Panc1 (cell line): ENCODE measurements at regions of chrX and their contacts with region 1.

Region 1: GRCh38 chrX:17242470-17242869 is 132.5 kb upstream of the NHS start:
- DNase-seq: peak; percentile 20
- ATAC-seq: 0 out of 2 replicates have a peak, but pooled peaks have one; percentile 66
- H3K4me3 ChIP-seq: no peak overlapping the region
- H3K27ac ChIP-seq: no peak overlapping the region
- H3K4me1 ChIP-seq: no peaks in the 10 kb centered on the region
- H3K27me3 ChIP-seq: no peaks in the 10 kb centered on the region
- CTCF ChIP-seq: peak; percentile 66

Region 2: DNA sequence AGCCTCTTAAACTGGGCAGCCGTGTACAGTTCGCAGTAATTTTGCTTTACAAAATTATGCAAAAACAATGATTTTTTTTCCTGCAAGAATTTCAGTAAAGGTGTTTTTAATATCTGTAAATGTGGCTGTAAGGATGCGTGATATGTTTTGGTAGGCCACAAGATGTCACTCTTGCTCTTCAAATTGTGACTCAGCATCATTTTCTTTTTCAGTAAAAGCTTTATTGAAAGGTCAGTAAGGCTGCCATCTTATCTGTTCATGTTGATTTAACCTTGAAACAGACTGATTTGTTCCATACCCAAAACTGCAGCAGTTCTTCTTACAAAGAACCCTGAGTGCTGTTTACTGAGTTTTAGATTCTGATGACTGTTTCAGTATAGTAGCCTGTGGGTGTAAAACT is 416.3 kb before region 1 on chrX:
- CTCF ChIA-PET with region 1: no interaction called
- POLR2A ChIA-PET with region 1: no interaction called
- in situ Hi-C with region 1: no loop called
- intact Hi-C with region 1: no loop called
- DNase-seq: no peak
- ATAC-seq: no peak
- H3K4me3 ChIP-seq: no peak overlapping the region
- H3K27ac ChIP-seq: no peak overlapping the region
- H3K4me1 ChIP-seq: no peaks in the 10 kb centered on the region
- H3K27me3 ChIP-seq: no peaks in the 10 kb centered on the region
- CTCF ChIP-seq: peak; percentile 52

Region 3: DNA sequence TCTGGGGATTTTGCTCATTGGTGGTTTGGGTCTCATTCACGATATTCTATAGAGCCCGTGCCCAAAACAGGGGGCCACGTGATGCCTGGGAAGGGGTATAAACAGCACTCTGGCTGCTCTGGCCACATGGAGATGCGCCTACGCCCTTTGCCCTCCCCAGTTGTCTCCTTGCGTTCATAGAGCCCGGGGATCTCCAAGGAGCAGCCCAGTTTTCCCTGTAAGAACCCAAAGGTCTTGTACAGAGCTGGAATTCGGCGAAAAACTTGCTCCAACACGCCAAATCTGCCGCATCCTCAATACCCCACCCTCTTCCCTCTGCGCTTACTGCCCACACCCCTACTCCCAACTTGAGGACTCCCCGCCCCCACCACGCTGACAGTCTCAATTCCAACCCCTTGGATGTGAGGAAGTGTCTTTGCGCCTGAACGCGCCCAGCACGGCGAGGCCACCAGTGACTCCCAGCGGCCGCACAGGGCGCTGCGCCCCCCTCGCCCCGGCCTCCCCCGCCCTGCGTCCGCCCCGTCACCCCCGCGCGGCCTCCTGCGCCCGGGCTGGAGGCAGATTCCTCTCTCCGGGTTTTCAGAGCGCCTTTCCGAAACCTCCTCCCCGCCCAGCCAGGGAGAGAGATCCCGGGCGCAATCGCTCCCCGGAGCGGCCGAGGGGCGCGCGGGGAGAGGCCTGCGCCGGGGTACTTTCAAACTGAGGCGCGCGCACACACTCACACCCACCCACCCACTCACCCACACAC is 132.3 kb after region 1 on chrX and contains the start of gene NHS:
- CTCF ChIA-PET with region 1: no interaction called
- POLR2A ChIA-PET with region 1: no interaction called
- in situ Hi-C with region 1: no loop called
- intact Hi-C with region 1: loop called (anchors 10 kb)
- DNase-seq: no peak
- ATAC-seq: peak; percentile 69
- H3K4me3 ChIP-seq: peak within 1 kb of the TSS; percentile 34 to 52
- H3K27ac ChIP-seq: no peak within 1 kb of the TSS
- H3K4me1 ChIP-seq: no peaks in the 10 kb centered on the region
- H3K27me3 ChIP-seq: no peaks in the 10 kb centered on the region
- CTCF ChIP-seq: peak; percentile 69
- total RNA-seq, gene NHS: 0.80 TPM

Region 4: DNA sequence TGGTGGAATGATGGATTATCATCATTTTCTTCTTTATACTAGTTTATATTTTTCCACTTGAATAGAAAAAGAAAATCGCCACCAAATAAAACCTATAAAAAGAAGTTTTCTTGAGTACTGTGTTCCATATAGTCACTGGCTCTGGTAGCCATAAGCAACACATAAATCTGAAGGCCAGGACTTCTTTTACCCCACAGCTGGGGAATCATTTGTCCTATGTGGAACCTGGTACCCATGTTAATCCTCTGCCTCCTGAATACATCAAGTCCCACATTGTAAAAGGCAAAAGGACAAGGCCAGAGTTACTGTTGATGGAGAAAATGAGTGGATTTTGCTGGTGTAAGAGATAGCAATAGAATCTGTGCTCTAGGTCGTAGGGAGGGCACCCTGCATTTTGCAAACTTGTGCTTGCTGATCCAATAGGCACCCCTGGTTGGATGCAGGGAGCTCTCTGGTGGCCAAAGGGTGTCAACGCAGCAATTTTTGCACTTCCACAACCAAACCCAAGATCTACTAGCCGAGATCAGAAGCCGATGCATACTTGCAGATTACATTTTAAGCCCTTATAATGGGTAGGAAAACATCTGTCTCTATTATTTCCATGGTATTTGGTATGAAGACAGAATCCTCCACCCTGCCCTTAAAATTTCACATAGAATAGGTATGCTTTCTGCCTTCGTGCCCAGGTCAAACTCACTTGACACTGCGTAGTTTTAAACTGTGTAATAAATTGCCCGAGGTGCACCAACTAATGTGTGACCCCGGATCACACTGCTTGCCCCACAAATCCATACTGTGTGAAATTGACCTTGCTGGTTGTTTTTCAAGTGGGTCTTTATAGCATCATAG is 348.6 kb after region 1 on chrX:
- CTCF ChIA-PET with region 1: no interaction called
- POLR2A ChIA-PET with region 1: no interaction called
- in situ Hi-C with region 1: no loop called
- intact Hi-C with region 1: loop called (anchors 2 kb)
- DNase-seq: peak; percentile 39
- ATAC-seq: 0 out of 2 replicates have a peak, but pooled peaks have one; percentile 65
- H3K4me3 ChIP-seq: 0 out of 4 replicates have a peak overlapping the region, but pooled peaks of 1 of the 2 experiments have one; percentile 4
- H3K27ac ChIP-seq: no peak overlapping the region
- H3K4me1 ChIP-seq: no peaks in the 10 kb centered on the region
- H3K27me3 ChIP-seq: no peaks in the 10 kb centered on the region; the same call in 1 of the 2 replicates
- CTCF ChIP-seq: peak; percentile 68

Region 5: GRCh38 chrX:17689971-17690409 is 447.5 kb after region 1 on chrX:
- CTCF ChIA-PET with region 1: no interaction called
- POLR2A ChIA-PET with region 1: no interaction called
- in situ Hi-C with region 1: no loop called
- intact Hi-C with region 1: loop called (anchors 5 kb)
- DNase-seq: peak; percentile 4
- ATAC-seq: peak; percentile 69; the same call in 1 of the 2 replicates
- H3K4me3 ChIP-seq: no peak overlapping the region
- H3K27ac ChIP-seq: no peak overlapping the region
- H3K4me1 ChIP-seq: no peaks in the 10 kb centered on the region
- H3K27me3 ChIP-seq: no peaks in the 10 kb centered on the region
- CTCF ChIP-seq: peak; percentile 69